CD4-positive, alpha-beta T cell (primary cell): ENCODE measurements at regions of chr17 and their contacts with region 1.

Region 1: DNA sequence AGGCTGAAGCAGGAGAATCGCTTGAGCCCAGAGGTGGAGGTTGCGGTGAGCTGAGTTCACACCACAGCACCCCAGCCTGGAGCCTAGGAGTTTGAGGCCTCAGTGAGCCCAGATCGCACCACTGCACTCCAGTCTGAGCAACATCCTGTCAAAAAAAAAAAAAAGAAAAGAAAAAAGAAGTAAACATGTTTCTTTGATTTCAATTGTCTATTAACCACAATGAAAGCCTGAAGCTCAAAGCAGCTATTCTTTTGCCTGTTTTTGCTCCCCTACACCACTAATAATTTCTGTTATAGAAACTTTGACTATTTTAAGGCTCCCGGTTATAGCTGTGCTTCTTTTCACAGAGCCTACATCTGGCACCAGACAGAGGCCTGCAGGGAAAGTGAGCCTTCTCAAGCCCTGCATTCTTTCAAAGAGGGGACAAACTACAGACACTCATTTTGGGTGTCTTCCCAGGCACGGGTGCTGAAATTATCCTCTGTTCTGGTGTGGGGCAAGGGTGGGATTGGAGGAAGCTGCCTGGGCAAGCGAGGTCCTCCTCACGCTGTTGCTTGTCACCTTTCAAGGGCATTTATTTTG is 14.2 kb upstream of the SLC52A1 start:
- DNase-seq: peak; percentile 56 to 94 (median 75)
- ATAC-seq: peak; percentile 97
- H3K4me3 ChIP-seq: no peak overlapping the region
- H3K4me3 Mint-ChIP-seq: peak overlapping the region; percentile 70
- H3K27ac ChIP-seq: peak overlapping the region; percentile 35 to 61
- H3K27ac Mint-ChIP-seq: peak overlapping the region; percentile 98
- H3K4me1 ChIP-seq: peaks cover 61% of the 10 kb centered on the region
- H3K4me1 Mint-ChIP-seq: peaks cover 47% of the 10 kb centered on the region
- H3K27me3 ChIP-seq: no peaks in the 10 kb centered on the region
- H3K27me3 Mint-ChIP-seq: no peaks in the 10 kb centered on the region
- CTCF ChIP-seq: no peak

Region 2: GRCh38 chr17:4948931-4949320 is 100.5 kb before region 1 on chr17:
- CTCF ChIA-PET with region 1: no interaction called
- POLR2A ChIA-PET with region 1: interaction called, 6 read pairs
- intact Hi-C with region 1: loop called in 1 of 2 experiments (anchors 5 kb)
- DNase-seq: peak in 13 of 14 experiments; percentile 36 to 89 (median 66)
- ATAC-seq: peak; percentile 32
- H3K4me3 ChIP-seq: peak overlapping the region; percentile 99
- H3K4me3 Mint-ChIP-seq: peak overlapping the region; percentile 99
- H3K27ac ChIP-seq: peak overlapping the region; percentile 84 to 98
- H3K27ac Mint-ChIP-seq: peak overlapping the region; percentile 90
- H3K4me1 ChIP-seq: peaks cover 45% of the 10 kb centered on the region
- H3K4me1 Mint-ChIP-seq: peaks cover 51% of the 10 kb centered on the region
- H3K27me3 ChIP-seq: no peaks in the 10 kb centered on the region
- H3K27me3 Mint-ChIP-seq: no peaks in the 10 kb centered on the region
- CTCF ChIP-seq: no peak

Region 3: DNA sequence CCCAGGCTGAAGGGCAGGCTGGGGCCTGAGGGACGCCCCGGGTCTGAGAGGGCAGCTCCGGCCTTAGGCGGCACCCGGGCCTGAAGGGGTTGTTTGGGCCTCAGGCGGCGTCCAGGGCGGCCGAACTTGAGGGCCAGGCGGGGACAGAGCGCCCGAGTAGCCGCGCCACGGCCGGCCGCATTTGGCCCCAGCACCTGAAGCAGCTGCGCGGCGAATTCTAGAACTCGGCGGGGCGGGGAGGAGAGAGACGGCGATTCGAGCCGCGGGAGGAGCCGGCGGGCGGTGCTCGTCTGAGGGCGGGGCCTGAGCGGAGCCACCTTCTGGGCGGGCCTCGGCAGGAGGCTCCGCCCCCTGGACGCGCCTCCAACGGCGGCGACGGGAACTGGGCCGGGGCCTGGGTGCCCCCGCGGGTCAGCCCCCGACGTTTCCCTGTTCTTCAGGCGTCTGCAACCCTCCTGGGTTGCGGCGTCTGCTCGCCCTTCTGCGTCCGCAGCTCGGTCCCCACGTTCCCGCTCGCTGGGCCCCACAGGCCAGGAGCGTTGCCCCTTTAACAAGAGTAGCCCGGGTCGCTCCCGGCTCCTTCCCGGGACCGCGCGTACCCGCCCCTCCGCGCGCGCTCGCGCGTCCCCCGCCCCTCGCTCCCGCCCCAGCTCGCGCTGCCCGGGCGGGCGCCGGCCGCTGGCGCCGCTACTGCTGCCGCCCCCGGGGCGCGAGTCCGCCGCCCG is 51.9 kb before region 1 on chr17 and contains the starts of genes INCA1 and KIF1C:
- CTCF ChIA-PET with region 1: no interaction called
- POLR2A ChIA-PET with region 1: interaction called, 11 read pairs
- intact Hi-C with region 1: no loop called
- DNase-seq: peak; percentile 83 to 96 (median 89)
- ATAC-seq: peak; percentile 98
- H3K4me3 ChIP-seq: peak within 1 kb of the TSS; percentile 62
- H3K4me3 Mint-ChIP-seq: peak within 1 kb of the TSS; percentile 85
- H3K27ac ChIP-seq: peak within 1 kb of the TSS; percentile 22 to 69
- H3K27ac Mint-ChIP-seq: peak within 1 kb of the TSS; percentile 81
- H3K4me1 ChIP-seq: peaks cover 24% of the 10 kb centered on the region
- H3K4me1 Mint-ChIP-seq: peaks cover 25% of the 10 kb centered on the region
- H3K27me3 ChIP-seq: no peaks in the 10 kb centered on the region
- H3K27me3 Mint-ChIP-seq: no peaks in the 10 kb centered on the region
- CTCF ChIP-seq: no peak
- total RNA-seq, gene INCA1: 0.19 TPM in 1 of 2 experiments, not detected in the other
- total RNA-seq, gene KIF1C: 10.2 to 12.2 TPM

Region 4: DNA sequence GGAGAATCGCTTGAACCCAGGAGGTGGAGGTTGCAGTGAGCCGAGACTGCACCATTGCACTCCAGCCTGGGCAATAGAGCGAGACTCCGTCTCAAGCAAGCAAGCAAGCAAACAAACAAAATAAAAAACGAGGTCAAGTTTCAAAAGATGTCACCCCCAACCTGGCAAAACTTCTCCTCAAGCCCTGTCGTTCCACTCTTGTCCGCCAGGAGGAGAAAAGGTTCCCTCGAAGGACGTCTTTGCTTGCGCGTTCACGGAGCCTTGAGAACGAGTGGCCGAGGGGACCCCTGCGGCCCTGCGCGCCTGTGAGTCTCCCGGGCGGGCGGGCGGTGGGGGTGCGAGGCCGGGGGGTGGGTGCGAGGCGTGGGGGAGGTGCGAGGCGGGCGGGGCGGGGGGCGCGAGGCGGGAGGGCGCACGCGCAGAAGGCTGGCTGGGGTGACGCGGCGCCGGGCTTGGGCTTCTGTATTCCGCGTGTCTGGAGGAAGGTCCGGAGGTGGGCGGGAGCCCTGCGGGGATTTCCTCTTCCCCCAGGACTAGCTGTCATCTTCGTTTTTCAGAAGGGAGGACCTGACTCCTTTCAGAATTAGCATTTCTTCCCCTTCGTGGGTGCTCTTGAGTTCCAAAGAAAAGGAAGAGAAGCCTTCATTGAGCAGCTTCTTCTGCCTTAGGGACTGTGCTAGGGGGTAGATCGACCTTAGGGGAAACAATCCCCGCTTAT is 17.9 kb before region 1 on chr17:
- CTCF ChIA-PET with region 1: interaction called, 10 read pairs
- POLR2A ChIA-PET with region 1: interaction called, 37 read pairs
- intact Hi-C with region 1: loop called in 1 of 2 experiments (anchors 1 kb)
- DNase-seq: peak; percentile 75 to 92 (median 80)
- ATAC-seq: peak; percentile 87
- H3K4me3 ChIP-seq: peak overlapping the region; percentile 61
- H3K4me3 Mint-ChIP-seq: peak overlapping the region; percentile 88
- H3K27ac ChIP-seq: peak overlapping the region; percentile 61 to 64
- H3K27ac Mint-ChIP-seq: peak overlapping the region; percentile 94
- H3K4me1 ChIP-seq: peaks cover 42% of the 10 kb centered on the region
- H3K4me1 Mint-ChIP-seq: peaks cover 28% of the 10 kb centered on the region
- H3K27me3 ChIP-seq: no peaks in the 10 kb centered on the region
- H3K27me3 Mint-ChIP-seq: no peaks in the 10 kb centered on the region
- CTCF ChIP-seq: peak; percentile 71

Region 5: DNA sequence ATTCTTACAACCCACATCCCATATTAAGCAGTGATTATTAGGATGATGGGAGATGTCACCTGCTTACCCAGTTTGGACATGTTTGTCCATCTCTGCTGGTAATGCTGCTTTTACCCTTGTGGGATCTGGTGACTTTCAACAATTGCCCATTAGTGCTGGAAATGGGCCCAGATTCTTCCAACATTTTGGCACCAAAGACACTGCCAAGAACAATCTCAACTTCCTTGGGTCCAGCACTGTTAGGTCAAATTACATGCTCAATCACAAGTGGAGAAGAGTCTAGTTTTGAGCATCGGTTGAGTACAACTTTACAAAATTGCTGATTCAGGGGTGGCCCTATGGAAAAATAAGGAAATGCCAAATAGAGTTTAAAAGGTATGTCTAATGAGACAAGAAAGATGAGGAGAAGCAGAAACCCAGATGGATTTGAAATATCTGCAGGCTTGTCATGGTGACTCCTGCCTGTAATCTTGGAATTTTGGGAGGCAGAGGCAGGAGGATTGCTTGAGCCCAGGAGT is 15.9 kb after region 1 on chr17:
- CTCF ChIA-PET with region 1: interaction called, 5 read pairs
- POLR2A ChIA-PET with region 1: interaction called, 4 read pairs
- intact Hi-C with region 1: loop called in 1 of 2 experiments (anchors 2 kb)
- DNase-seq: no peak
- ATAC-seq: no peak
- H3K4me3 ChIP-seq: no peak overlapping the region
- H3K4me3 Mint-ChIP-seq: no peak overlapping the region
- H3K27ac ChIP-seq: no peak overlapping the region
- H3K27ac Mint-ChIP-seq: no peak overlapping the region
- H3K4me1 ChIP-seq: peaks cover 4% of the 10 kb centered on the region
- H3K4me1 Mint-ChIP-seq: peaks cover 5% of the 10 kb centered on the region
- H3K27me3 ChIP-seq: no peaks in the 10 kb centered on the region
- H3K27me3 Mint-ChIP-seq: no peaks in the 10 kb centered on the region
- CTCF ChIP-seq: no peak